Activated CD4-positive, alpha-beta T cell treated with anti-CD3 and anti-CD28 coated beads for 36 hours (primary cell): ENCODE measurements at regions of chr16 and their contacts with region 1.

Region 1: GRCh38 chr16:23803591-23804123 is 32.1 kb upstream of the PRKCB start:
- DNase-seq: peak; percentile 84
- ATAC-seq: peak; percentile 88
- H3K4me3 Mint-ChIP-seq: peak overlapping the region; percentile 1
- H3K27ac Mint-ChIP-seq: peak overlapping the region; percentile 42
- H3K4me1 Mint-ChIP-seq: peaks cover 12% of the 10 kb centered on the region
- H3K27me3 Mint-ChIP-seq: peaks cover 2% of the 10 kb centered on the region

Region 2: DNA sequence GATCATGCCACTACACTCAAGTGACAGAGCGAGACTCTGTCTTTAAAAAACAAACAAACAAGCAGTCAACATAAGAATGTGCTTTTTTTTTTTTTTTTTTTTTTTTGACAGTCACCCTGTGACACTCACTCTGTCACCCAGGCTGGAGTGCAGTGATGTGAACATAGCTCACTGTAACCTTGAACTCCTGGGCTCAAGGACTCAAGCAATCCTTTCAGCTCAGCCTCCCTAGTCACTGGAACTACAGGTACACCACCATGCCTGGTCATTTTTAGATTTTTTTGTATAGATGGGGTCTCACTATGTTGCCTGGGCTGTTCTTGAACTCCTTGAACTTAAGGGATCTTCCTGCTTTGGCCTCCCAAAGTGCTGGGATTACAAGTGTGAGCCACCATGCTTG is 64.1 kb before region 1 on chr16:
- CTCF ChIA-PET with region 1: no interaction called
- POLR2A ChIA-PET with region 1: no interaction called
- intact Hi-C with region 1: loop called in 1 of 2 experiments (anchors 5 kb)
- DNase-seq: no peak
- ATAC-seq: no peak
- H3K4me3 Mint-ChIP-seq: no peak overlapping the region
- H3K27ac Mint-ChIP-seq: no peak overlapping the region
- H3K4me1 Mint-ChIP-seq: peaks cover 5% of the 10 kb centered on the region
- H3K27me3 Mint-ChIP-seq: peaks cover 15% of the 10 kb centered on the region

Region 3: DNA sequence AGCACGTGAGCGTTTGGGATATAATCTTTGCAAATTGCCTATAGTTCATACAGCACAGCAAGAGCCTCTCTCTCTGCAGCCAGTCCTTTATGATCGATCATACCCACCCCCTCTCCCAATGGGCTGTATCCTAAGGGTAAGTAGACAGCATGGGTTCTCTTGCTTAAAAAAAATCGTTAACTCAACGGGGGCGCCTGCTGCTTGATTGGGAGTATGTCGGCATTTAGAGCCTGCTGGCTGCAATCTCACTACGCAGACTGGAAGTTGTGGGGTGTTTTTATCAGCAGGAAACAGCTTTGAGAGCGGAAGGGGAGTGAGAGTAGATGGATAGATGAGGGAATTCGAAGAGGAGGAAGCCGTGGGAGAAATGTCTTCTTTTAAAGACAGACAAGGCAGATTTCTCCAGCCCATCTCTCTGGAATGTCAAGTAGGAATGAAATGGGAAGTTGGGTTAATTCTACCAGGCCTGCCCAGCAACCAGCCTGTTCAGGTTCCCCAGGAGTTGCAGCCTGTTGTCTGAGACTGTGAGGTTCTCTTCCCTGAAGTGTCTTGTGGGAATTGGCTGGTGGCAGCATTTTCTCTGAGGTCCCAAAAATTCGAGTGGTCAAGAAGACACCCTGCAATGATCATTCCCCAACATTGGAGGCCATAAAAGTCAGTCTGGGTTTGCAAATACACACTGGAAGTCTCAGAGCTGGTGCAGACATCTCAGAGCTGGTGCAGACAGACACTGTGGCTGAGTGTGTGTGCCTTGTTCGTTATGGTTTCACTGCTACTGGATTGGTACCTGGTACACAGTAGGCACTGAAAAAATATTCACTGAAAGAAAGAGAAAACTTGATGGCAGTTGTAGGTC is 97.7 kb after region 1 on chr16:
- CTCF ChIA-PET with region 1: interaction called, 10 read pairs
- POLR2A ChIA-PET with region 1: interaction called, 3 read pairs
- intact Hi-C with region 1: no loop called
- DNase-seq: peak; percentile 18
- ATAC-seq: no peak
- H3K4me3 Mint-ChIP-seq: peak overlapping the region; percentile 5
- H3K27ac Mint-ChIP-seq: peak overlapping the region; percentile 48
- H3K4me1 Mint-ChIP-seq: peaks cover 57% of the 10 kb centered on the region
- H3K27me3 Mint-ChIP-seq: no peaks in the 10 kb centered on the region

Region 4: GRCh38 chr16:24036614-24037013 is 233.0 kb after region 1 on chr16:
- CTCF ChIA-PET with region 1: interaction called, 81 read pairs
- POLR2A ChIA-PET with region 1: no interaction called
- intact Hi-C with region 1: loop called (anchors 1 kb)
- DNase-seq: peak; percentile 47
- ATAC-seq: peak; percentile 60
- H3K4me3 Mint-ChIP-seq: no peak overlapping the region
- H3K27ac Mint-ChIP-seq: no peak overlapping the region
- H3K4me1 Mint-ChIP-seq: peaks cover 29% of the 10 kb centered on the region
- H3K27me3 Mint-ChIP-seq: no peaks in the 10 kb centered on the region

Region 5: DNA sequence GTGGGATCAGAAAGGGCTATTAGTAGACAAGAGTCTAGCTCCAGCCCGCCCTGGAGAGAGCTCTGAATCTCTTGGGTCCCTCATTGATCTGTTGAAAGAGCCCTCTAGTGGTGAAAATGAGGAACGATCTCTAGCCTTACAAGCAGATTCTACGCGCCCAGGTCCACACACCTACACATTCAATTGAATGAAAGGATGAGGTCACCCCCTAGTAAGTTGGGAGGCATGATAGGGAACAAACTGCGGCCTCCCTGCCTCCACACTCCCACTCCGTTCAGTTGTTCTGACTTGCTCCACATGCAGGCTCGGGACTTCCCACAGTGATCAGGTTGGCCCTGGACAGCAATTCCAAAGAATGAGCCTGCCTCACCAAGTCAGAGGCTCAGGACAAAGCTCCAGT is 449.5 kb after region 1 on chr16:
- CTCF ChIA-PET with region 1: interaction called, 3 read pairs
- POLR2A ChIA-PET with region 1: no interaction called
- intact Hi-C with region 1: loop called (anchors 1 to 5 kb)
- DNase-seq: peak; percentile 63
- ATAC-seq: peak; percentile 79
- H3K4me3 Mint-ChIP-seq: no peak overlapping the region
- H3K27ac Mint-ChIP-seq: no peak overlapping the region
- H3K4me1 Mint-ChIP-seq: no peaks in the 10 kb centered on the region
- H3K27me3 Mint-ChIP-seq: peaks cover 45% of the 10 kb centered on the region